ENCODE measurements at regions of chr1 and their contacts with region 1.

Region 1: DNA sequence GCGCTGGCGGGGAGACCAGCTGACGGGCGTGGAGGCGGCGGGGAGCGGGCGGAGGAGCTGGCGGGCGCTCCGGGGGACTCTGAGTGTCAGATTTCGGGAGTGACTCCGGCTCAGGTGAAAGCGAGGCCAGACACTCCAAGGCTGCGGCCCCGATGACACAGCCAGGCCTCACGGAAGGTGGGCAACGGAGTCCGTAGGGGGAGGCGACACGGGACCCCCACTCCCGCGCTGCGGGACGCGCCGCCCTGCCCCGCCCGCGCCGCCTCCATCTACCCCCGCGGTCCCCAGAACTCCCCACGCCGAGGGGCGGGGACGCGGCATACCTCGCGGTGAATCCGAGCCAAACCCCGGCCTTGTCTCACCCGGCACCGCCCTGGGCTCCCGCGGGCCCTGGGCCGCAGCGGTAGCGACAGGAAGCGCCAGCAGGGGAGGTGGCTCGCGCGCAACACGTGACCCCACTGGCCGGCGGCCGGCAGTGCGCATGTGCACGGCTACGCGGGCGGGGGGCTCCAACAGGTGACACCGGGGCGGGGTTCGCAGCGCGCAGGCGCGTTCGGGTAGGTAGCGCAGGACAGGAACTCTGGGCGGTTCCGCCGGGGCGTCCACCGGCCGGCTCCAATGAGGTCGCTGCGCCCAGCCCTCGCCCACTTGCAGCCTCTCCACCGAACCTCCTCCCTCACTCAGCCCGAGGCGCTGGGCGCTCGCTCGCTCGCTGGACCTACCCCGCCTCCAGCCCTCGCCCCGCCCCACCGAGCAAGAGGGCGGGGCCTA is at the start of gene CC2D1B:
- DNase-seq: peak; percentile 86
- H3K4me3 ChIP-seq: peak within 1 kb of the TSS; percentile 97
- H3K27me3 ChIP-seq: no peaks in the 10 kb centered on the region
- CTCF ChIP-seq: no peak
- polyA plus RNA-seq, gene CC2D1B: 13.1 and 18.9 TPM in 2 replicates

Region 2: GRCh38 chr1:52007215-52008002 is 358.5 kb before region 1 on chr1:
- CTCF ChIA-PET with region 1: no interaction called
- POLR2A ChIA-PET with region 1: interaction called, 12 read pairs
- DNase-seq: no peak
- H3K4me3 ChIP-seq: no peak overlapping the region
- H3K27me3 ChIP-seq: no peaks in the 10 kb centered on the region
- CTCF ChIP-seq: no peak